Caco-2 (cell line): ENCODE measurements at regions of chr18 and their contacts with region 1.

Region 1: DNA sequence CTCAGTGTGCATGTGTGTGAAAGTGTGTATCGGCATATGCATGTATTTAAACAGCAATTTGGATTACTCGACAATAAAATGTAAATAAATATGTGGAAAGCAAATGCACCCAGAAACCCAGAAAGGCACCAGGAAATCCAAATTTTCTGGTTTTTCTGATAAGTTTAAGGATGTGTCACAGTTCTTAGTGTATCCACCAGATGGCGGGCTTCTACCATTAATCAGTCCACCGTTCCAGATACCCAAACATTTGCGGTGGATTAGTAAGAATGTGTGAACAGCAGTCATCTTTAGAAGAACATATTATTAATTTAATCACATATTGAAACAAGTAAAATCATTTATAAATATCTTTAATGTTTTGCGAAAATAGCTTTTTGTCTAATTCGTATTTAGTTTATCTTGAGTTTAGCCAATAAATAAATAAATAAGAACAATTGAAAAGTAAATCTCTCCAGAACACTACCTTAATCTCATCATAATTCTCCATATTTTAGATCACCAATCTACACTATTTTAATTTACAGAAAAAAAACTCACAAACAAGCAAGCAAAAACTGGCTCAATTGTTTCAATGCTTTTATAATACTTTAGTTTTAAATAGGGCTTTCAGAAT is 298.9 kb downstream of the DSEL start:
- DNase-seq: peak in 1 of 2 experiments; percentile 21
- H3K4me3 ChIP-seq: no peak overlapping the region
- H3K4me3 Mint-ChIP-seq: no peak overlapping the region
- H3K27ac Mint-ChIP-seq: no peak overlapping the region
- H3K4me1 ChIP-seq: no peaks in the 10 kb centered on the region
- H3K4me1 Mint-ChIP-seq: no peaks in the 10 kb centered on the region
- H3K27me3 ChIP-seq: no peaks in the 10 kb centered on the region
- H3K27me3 Mint-ChIP-seq: no peaks in the 10 kb centered on the region
- CTCF ChIP-seq: peak; percentile 37 to 52

Region 2: DNA sequence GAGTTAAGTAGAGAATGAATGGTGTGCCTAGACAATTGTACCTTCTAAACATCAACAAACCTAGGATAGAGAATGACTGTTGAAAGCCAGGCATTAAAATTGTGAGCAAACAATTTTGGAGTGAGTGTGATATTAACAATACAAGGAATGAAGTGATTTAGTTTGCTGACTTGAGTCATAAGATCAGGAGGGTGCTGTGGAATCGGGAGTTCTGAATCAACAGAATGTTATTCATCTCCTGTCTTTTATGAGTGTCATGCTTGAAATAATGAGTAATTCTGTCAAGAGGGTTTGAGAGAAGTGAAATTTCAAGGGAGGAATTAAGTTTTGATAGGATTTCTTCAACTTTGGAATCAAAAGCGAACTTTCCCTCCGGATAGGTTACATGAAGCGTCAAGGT is 513.2 kb after region 1 on chr18:
- CTCF ChIA-PET with region 1: no interaction called
- POLR2A ChIA-PET with region 1: no interaction called
- intact Hi-C with region 1: no loop called
- DNase-seq: no peak
- H3K4me3 ChIP-seq: no peak overlapping the region
- H3K4me3 Mint-ChIP-seq: no peak overlapping the region
- H3K27ac Mint-ChIP-seq: no peak overlapping the region
- H3K4me1 ChIP-seq: no peaks in the 10 kb centered on the region
- H3K4me1 Mint-ChIP-seq: no peaks in the 10 kb centered on the region
- H3K27me3 ChIP-seq: no peaks in the 10 kb centered on the region
- H3K27me3 Mint-ChIP-seq: peaks cover 3% of the 10 kb centered on the region
- CTCF ChIP-seq: no peak

Region 3: DNA sequence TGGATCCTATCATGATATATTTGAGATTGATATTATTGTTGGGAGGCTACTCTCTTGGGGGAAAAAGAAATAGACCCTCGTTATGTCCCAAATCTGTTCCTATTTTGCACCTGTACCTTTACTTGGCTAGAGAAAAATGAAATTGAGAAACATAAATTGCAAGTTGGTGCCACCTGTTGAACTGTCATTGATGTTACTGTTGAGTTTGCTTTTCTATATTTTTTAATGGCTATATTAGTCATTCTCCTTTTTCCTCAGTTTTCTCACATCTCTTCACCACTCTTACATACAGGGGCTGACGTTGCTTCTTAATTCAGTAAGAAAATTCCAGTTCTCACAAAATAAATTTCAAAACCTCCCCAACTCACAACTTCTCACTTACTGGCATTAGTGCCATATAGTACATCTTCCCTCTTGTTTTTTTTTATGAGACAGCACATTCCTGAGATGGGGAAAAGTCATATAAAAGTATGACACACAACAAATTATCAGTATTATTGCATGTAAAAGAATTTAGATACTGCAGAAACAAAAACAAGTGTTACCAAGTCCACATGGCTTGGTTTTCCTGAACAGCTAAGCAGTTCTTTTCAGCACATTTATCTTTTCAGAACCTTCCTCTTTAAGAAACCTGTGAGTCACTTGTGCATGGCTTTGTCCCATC is 647.1 kb after region 1 on chr18:
- CTCF ChIA-PET with region 1: no interaction called
- POLR2A ChIA-PET with region 1: no interaction called
- intact Hi-C with region 1: loop called (anchors 10 kb)
- DNase-seq: no peak
- H3K4me3 ChIP-seq: no peak overlapping the region
- H3K4me3 Mint-ChIP-seq: no peak overlapping the region
- H3K27ac Mint-ChIP-seq: no peak overlapping the region
- H3K4me1 ChIP-seq: no peaks in the 10 kb centered on the region
- H3K4me1 Mint-ChIP-seq: no peaks in the 10 kb centered on the region
- H3K27me3 ChIP-seq: no peaks in the 10 kb centered on the region
- H3K27me3 Mint-ChIP-seq: no peaks in the 10 kb centered on the region
- CTCF ChIP-seq: no peak

Region 4: DNA sequence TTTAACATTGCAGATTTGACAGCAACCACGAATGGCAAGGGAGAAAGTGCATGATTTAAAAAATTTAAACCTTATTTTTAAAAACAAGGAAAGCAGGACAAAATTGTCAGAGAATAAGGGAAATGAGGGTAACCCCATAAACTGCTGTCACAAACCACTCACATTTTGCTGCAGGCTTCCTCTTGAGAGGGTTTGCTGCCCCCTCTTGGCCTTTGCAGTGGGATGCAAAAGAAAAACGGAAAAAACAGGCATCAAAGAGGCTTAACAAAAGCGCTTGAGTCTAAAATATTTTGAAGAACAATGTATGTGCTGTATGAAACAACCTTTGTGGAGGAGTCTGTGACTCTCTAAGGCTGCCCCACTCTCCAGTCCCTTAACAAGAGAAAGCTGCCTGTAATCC is 1405.7 kb after region 1 on chr18:
- CTCF ChIA-PET with region 1: no interaction called
- POLR2A ChIA-PET with region 1: no interaction called
- intact Hi-C with region 1: loop called (anchors 5 kb)
- DNase-seq: peak in 1 of 2 experiments; percentile 28
- H3K4me3 ChIP-seq: no peak overlapping the region
- H3K4me3 Mint-ChIP-seq: no peak overlapping the region
- H3K27ac Mint-ChIP-seq: no peak overlapping the region
- H3K4me1 ChIP-seq: no peaks in the 10 kb centered on the region
- H3K4me1 Mint-ChIP-seq: no peaks in the 10 kb centered on the region
- H3K27me3 ChIP-seq: no peaks in the 10 kb centered on the region
- H3K27me3 Mint-ChIP-seq: peaks cover 4% of the 10 kb centered on the region
- CTCF ChIP-seq: peak; percentile 41 to 59

Region 5: DNA sequence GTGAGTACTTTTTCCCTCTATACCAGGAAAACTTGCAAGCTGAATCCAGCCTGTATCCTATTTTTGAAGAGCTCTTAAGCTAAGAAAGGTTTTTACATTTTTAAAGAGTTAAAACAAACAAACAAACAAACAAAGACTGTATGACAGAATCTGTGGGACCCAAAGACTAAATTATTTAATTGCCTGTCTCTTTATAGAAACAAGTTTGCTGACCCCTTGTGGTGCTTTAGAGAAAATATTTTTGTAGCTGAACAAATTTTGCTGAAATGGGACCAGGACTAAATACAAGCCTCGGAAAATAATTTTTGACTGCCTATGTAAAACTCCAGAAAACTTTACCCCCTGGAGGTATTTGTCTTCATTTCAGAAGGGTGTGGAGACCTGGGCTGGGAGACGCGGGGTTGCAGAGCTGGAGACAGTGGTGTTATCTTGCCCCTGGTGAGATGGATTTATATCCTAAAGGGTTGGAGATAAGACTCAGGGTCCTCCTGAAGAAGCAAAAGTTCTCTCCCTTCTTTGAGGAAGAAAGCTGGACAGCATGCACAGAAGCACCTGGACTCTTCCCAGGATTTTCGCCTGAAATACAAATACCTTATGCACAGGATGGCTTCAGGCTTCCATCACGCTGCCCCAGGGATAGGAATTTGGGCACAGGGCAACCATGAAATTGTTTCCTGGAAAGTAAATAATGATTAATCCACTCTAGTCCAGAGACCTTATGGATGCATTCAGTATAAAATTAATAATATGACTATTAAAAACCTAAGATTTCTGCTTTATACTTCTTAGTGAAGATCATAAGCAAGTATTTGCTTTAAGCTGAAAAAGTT is 1442.9 kb after region 1 on chr18:
- CTCF ChIA-PET with region 1: no interaction called
- POLR2A ChIA-PET with region 1: no interaction called
- intact Hi-C with region 1: loop called (anchors 1 kb)
- DNase-seq: no peak
- H3K4me3 ChIP-seq: no peak overlapping the region
- H3K4me3 Mint-ChIP-seq: no peak overlapping the region
- H3K27ac Mint-ChIP-seq: no peak overlapping the region
- H3K4me1 ChIP-seq: no peaks in the 10 kb centered on the region
- H3K4me1 Mint-ChIP-seq: no peaks in the 10 kb centered on the region
- H3K27me3 ChIP-seq: no peaks in the 10 kb centered on the region
- H3K27me3 Mint-ChIP-seq: no peaks in the 10 kb centered on the region
- CTCF ChIP-seq: peak in 1 of 2 experiments; percentile 16